ENCODE measurements at regions of chr17 and their contacts with region 1.

Region 1: DNA sequence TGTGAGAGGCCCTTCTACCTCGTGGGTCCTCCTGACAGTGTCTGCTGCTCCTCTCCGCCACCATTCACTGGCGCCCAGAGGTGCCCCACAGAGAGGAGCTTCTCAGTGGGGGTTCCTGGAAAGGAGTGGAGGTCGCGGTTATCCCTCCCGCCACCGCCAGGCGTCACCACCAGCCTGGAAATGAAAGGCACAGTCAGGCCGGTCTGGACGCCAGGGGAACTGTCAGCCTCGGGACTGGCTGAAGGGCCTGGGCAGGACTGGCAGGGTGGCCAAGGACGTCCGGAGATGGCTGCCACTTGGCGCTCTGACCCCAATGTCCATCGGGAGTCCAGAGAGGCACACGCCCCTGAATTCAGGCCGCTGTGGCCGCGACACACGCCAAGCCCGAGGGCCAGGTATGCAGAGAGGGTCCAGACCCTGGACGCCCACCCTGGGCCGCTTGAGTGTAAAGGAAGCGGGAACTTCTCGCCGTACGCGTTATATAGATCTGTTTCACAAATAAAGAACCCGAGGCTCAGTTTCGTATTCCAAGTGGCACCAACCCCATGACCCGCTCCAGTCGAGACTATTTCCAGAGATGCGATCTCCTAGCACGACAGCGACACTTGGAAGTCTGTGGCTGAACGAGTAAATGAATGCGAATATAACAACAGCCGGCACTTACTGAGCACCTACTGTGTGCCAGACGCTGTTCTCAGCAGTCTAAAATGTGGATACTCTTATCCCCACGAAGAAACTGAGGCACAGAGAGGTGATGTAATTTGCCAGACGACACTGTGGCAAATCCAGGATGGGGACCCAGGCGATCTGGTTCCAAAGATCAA is 7.6 kb upstream of the NXPH3 start:
- DNase-seq: no peak
- H3K4me3 ChIP-seq: peak overlapping the region; percentile 23
- H3K27me3 ChIP-seq: peaks cover 7% of the 10 kb centered on the region
- CTCF ChIP-seq: peak; percentile 88

Region 2: DNA sequence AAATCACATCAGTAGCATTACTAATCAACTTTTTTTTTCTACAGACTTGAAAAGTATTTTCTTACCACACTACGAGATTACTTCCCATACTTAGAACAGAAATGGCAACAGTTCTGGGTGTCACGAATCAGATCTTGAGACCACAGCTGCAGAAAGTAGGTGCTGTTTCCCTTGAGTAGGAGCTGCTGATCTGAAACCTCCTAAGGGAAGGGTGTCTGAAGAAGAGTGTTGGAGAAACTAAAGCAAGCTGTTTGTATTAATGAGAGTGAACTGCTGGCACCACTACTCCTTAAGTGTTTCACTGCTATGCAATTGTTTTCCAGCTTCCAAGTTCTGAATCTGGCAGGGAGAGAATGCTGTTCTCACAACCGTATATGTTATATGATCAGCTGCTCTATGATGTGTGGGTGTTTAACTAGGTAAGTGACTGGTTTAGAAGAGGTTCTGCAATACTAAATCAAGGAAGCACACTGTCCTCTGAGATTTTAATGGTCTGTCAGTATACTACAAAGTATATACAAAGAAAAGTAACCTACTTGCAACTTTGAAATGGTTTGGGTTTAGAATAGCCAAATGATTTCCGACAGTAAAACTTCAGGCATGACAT is 209.3 kb before region 1 on chr17:
- CTCF ChIA-PET with region 1: no interaction called
- POLR2A ChIA-PET with region 1: no interaction called
- DNase-seq: no peak
- H3K4me3 ChIP-seq: no peak overlapping the region
- H3K27me3 ChIP-seq: no peaks in the 10 kb centered on the region
- CTCF ChIP-seq: no peak

Region 3: DNA sequence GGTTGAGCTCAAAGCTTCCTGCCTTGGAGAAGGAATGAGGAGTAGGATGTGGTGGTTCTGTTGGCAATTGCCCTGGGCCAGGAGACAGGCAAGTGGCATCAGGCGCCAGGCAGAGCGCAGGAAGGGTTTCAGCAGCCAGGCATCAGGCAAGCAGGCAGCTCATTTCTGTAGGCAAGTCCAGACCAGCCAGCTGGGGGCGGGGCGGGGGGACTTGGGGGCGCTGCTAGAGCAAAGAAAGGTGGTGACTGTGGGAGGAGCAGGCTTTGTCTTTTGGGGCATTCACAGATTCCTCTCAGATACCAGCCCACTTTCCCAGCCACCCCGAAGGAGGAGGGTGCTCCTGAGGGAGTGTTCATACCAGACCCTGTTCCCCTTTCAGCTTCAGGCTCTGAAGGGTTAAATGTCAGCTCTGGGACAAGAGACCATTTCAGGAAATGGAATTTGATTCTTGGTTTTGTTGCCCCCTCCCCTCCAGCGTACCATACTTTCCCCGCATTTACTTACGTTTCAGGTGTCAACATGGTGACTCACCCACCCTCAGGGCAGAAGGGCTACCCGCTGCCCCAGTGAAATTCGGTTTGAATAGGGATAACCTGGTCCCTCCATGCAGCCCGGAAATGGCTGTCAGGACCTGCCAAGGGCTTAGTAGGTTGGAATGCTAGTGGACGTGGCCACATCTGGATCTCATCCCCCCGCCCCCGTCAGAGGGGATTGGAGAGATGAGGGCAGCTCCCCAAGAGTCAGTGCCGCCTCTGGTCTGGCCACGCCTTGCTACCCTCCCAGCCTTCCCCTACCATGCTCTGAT is 59.8 kb before region 1 on chr17:
- CTCF ChIA-PET with region 1: no interaction called
- POLR2A ChIA-PET with region 1: no interaction called
- DNase-seq: no peak
- H3K4me3 ChIP-seq: no peak overlapping the region
- H3K27me3 ChIP-seq: peaks cover 22% of the 10 kb centered on the region
- CTCF ChIP-seq: no peak

Region 4: DNA sequence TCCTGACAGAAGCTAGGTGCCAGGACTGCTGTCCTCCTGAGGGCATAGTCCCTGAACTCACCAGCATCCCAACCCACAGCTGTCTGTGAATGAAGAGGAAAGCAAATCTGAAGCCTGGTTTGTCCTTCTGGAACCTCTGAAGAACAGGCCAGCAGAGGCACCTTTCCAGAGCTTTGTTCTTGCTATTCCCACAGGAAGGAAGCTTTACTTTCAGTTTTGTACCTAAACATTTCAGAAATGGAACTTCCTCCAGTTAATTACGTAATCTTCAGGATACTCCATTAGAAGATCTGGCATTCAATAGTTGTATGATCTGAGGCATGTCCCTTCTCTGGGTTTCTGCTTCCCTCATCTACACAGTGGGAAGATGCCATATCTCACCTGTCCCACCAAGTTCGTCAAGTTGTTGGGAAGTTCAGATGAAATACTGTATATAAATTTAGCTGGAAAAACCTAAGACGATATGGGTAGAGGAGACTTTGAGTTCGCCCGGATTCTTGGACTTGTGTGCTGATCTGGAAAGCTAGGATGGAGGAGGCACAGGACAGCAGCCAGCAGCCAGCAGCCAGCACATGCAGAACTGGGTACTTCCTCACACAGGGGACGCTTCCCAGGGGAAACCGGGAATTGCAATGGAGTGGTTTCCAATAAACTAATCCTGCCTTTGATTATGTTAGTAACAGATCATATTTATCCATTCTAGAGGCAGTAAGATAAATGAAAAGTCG is 30.0 kb after region 1 on chr17:
- CTCF ChIA-PET with region 1: interaction called, 13 read pairs
- POLR2A ChIA-PET with region 1: no interaction called
- DNase-seq: no peak
- H3K4me3 ChIP-seq: no peak overlapping the region
- H3K27me3 ChIP-seq: no peaks in the 10 kb centered on the region
- CTCF ChIP-seq: no peak

Region 5: GRCh38 chr17:49646391-49647255 is 78.5 kb after region 1 on chr17:
- CTCF ChIA-PET with region 1: interaction called, 12 read pairs
- POLR2A ChIA-PET with region 1: interaction called, 7 read pairs
- DNase-seq: peak; percentile 59
- H3K4me3 ChIP-seq: no peak overlapping the region
- H3K27me3 ChIP-seq: no peaks in the 10 kb centered on the region
- CTCF ChIP-seq: no peak

Region 6: GRCh38 chr17:49707608-49708514 is 139.8 kb after region 1 on chr17 and contains the start of gene SLC35B1:
- CTCF ChIA-PET with region 1: interaction called, 638 read pairs
- POLR2A ChIA-PET with region 1: no interaction called
- DNase-seq: peak; percentile 98
- H3K4me3 ChIP-seq: peak within 1 kb of the TSS; percentile 92
- H3K27me3 ChIP-seq: no peaks in the 10 kb centered on the region
- CTCF ChIP-seq: peak; percentile 95
- polyA plus RNA-seq, gene SLC35B1: 116 and 120 TPM in 2 replicates

Region 7: GRCh38 chr17:49779739-49780231 is 211.7 kb after region 1 on chr17:
- CTCF ChIA-PET with region 1: interaction called, 11 read pairs
- POLR2A ChIA-PET with region 1: no interaction called
- DNase-seq: peak; percentile 68
- H3K4me3 ChIP-seq: no peak overlapping the region
- H3K27me3 ChIP-seq: 0 out of 2 replicates have a peak, but pooled peaks cover 1% of the 10 kb centered on the region
- CTCF ChIP-seq: peak; percentile 68

Region 8: DNA sequence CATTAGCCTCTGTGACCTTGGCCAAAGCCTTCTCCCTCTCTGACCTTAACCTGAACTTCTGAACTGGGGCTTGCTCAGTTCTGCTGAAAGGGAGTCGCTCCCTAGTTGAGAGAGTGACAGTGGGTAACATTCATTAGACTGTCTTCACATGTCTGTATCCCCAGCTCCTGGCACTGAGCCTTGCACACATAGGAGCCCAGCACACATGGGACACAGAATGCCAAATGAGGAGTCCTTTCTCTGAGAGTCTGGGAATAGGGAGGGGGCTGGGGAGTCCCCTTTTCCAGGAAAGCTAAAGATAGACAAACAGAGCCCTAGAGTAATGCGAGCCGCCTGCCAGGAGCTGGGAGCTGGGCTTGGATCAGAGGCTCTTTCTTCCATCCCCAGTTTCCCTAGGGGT is 277.2 kb after region 1 on chr17:
- CTCF ChIA-PET with region 1: interaction called, 12 read pairs
- POLR2A ChIA-PET with region 1: no interaction called
- DNase-seq: no peak
- H3K4me3 ChIP-seq: no peak overlapping the region
- H3K27me3 ChIP-seq: no peaks in the 10 kb centered on the region
- CTCF ChIP-seq: no peak

Region 9: GRCh38 chr17:49851387-49852291 is 283.6 kb after region 1 on chr17:
- CTCF ChIA-PET with region 1: interaction called, 17 read pairs
- POLR2A ChIA-PET with region 1: no interaction called
- DNase-seq: no peak
- H3K4me3 ChIP-seq: peak overlapping the region; percentile 38
- H3K27me3 ChIP-seq: peaks cover 11% of the 10 kb centered on the region
- CTCF ChIP-seq: peak; percentile 79